A673 (cell line): ENCODE measurements at regions of chr1 and their contacts with region 1.

Region 1: DNA sequence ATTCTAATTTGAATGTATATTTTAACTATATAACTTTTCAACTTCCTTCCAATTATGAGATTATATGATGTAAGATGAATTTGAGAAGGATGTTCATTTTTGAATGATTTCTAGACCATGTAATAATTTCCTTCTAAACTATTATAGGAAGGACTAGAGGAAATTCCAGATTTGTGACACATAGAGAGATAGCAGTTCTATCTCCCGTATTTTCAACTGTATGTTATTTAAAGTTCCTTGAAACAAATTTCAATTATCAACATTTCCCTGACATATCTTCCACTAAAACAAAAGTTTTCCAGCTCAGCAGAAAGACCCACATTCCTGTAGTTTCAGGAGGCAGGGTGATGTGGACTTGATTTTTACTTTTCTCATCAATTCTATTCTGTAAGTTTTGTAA is 396.7 kb upstream of the C1orf87 start:
- DNase-seq: no peak
- H3K4me3 ChIP-seq: no peak overlapping the region
- H3K27ac ChIP-seq: no peak overlapping the region
- H3K4me1 ChIP-seq: peaks cover 10% of the 10 kb centered on the region
- H3K27me3 ChIP-seq: no peaks in the 10 kb centered on the region
- CTCF ChIP-seq: no peak

Region 2: GRCh38 chr1:60331647-60332046 is 138.6 kb before region 1 on chr1:
- CTCF ChIA-PET with region 1: no interaction called
- POLR2A ChIA-PET with region 1: no interaction called
- intact Hi-C with region 1: no loop called
- DNase-seq: peak; percentile 42
- H3K4me3 ChIP-seq: no peak overlapping the region
- H3K27ac ChIP-seq: no peak overlapping the region
- H3K4me1 ChIP-seq: peaks cover 3% of the 10 kb centered on the region
- H3K27me3 ChIP-seq: peaks cover 54% of the 10 kb centered on the region
- CTCF ChIP-seq: no peak

Region 3: DNA sequence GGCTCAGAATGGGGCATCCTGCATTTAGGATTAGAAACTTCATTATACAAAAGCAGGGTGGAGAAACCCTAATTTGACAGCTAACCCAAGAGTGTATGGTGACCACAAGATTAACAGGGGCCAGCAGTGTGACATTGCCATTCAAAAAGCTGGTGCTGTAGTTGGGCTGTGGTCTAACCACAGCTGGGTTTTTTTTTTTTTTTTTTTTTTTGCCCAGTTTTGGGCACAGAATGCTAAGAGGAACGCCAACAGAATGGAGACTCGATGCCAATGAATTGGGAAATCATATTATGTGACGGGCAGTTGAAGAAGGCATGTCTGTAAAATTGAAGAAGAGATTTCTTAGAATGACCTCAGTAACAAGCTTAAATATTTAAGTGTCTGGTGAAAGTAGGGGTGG is 670.5 kb after region 1 on chr1:
- CTCF ChIA-PET with region 1: interaction called, 10 read pairs
- POLR2A ChIA-PET with region 1: no interaction called
- intact Hi-C with region 1: no loop called
- DNase-seq: no peak
- H3K4me3 ChIP-seq: no peak overlapping the region
- H3K27ac ChIP-seq: peak overlapping the region; percentile 59
- H3K4me1 ChIP-seq: peaks cover 71% of the 10 kb centered on the region
- H3K27me3 ChIP-seq: no peaks in the 10 kb centered on the region
- CTCF ChIP-seq: no peak